Mammary epithelial cell (primary cell): ENCODE measurements at regions of chr3 and their contacts with region 1.

Region 1: DNA sequence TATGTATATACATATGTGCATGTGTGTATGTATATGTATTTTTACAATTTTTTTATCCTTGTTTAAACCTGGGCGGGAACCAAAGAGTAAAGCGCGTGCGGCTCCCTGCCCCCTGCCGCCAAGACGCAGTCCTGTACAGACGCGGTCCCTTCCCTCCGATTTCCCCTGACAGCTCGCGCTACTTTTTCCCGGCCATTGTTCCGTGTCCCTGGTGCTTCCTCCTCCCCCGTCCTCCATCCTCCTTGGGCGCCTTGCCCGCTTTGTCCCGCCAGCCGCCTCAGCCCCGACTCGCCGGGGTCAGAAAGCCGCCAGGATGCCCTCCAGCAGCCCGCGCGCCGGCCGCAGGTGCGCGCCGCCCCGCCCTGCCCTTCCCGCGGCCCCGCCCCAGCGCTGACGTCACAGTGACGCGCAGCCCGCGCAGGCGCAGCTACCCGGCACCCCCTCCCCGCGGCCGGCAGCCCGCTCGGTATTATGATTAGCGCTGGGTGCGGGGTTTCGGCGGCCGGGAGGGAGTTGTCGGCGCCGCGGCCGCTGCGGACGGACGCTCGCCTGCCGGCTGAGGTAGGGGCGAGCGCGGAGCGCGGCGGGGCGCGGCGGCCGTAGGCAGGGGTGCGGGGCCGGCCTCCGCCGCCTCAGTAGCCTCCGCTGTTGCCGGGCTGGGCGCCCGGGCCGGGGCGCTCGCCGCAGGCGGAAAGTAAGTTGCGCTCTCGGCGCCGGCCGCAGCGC is at the start of gene SNRK:
- DNase-seq: peak; percentile 81
- H3K4me3 ChIP-seq: peak within 1 kb of the TSS; percentile 69 to 86 (median 80)
- H3K27ac ChIP-seq: peak within 1 kb of the TSS; percentile 92
- H3K4me1 ChIP-seq: peaks cover 32% of the 10 kb centered on the region
- H3K27me3 ChIP-seq: no peaks in the 10 kb centered on the region
- CTCF ChIP-seq: peak in 1 of 2 donors; percentile 43
- total RNA-seq, gene SNRK: 17.5 to 18.6 TPM

Region 2: GRCh38 chr3:43162230-43163084 is 123.8 kb before region 1 on chr3:
- CTCF ChIA-PET with region 1: no interaction called
- dilution Hi-C with region 1: no loop called
- in situ Hi-C with region 1: no loop called
- intact Hi-C with region 1: loop called (anchors 1 kb)
- DNase-seq: no peak
- H3K4me3 ChIP-seq: no peak overlapping the region
- H3K27ac ChIP-seq: no peak overlapping the region
- H3K4me1 ChIP-seq: no peaks in the 10 kb centered on the region
- H3K27me3 ChIP-seq: no peaks in the 10 kb centered on the region
- CTCF ChIP-seq: peak; percentile 11 to 48

Region 3: DNA sequence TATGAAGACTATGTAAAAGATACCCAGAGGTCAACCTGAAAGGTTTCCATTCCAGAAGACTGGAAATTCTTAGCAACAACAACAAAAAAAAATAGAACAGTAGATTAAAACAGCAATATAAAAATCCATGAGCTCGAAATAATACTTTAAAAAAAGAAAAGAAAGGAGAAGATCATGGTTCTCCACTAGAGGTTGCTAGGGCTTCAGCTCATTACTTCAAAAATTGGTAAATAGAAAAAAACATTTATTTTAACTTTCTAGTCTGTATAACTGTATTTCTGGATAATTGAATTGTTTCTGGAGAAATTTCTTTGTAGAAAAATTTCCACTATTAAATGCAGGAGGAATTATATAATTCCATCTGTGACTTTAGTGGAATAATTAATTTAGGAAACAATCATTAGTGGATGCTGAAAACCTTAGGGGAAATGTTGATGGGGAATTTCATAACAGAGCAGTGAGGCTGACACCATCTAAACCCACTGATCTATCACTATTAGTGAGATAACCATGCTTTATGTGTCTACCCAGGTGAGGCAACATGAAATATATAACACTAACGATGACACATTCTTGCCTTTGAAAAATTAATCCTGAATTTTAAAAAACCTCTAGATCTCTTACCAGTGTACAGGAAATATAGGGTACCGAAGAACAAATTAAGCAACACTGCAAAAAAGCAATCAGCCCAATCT is 62.5 kb before region 1 on chr3:
- CTCF ChIA-PET with region 1: interaction called, 3 read pairs
- dilution Hi-C with region 1: no loop called
- in situ Hi-C with region 1: no loop called
- intact Hi-C with region 1: loop called (anchors 2 kb)
- DNase-seq: no peak
- H3K4me3 ChIP-seq: no peak overlapping the region
- H3K27ac ChIP-seq: no peak overlapping the region
- H3K4me1 ChIP-seq: no peaks in the 10 kb centered on the region
- H3K27me3 ChIP-seq: peaks cover 2% of the 10 kb centered on the region
- CTCF ChIP-seq: peak; percentile 30 to 52

Region 4: DNA sequence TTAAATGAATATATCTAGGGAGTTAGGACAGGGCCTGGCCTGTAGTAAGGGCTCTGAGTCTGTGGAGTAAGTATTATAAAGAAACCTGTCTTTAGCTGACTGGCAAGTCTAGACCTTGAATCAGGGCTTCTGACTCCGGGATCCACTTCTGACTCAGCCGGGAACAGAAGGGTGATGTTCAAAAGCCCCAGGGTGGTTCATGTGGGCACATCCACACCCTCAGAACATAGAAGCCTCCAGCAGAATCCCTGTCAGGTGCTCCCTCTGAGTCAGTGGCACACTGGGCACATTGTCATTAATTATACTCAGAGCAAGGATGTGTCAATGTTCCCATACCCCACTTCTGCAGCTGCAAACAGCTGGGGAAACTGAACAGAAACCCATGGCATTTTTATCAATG is 26.7 kb before region 1 on chr3:
- CTCF ChIA-PET with region 1: no interaction called
- dilution Hi-C with region 1: no loop called
- in situ Hi-C with region 1: no loop called
- intact Hi-C with region 1: loop called (anchors 1 kb)
- DNase-seq: peak; percentile 99
- H3K4me3 ChIP-seq: no peak overlapping the region
- H3K27ac ChIP-seq: peak overlapping the region; percentile 63
- H3K4me1 ChIP-seq: peaks cover 15% of the 10 kb centered on the region
- H3K27me3 ChIP-seq: no peaks in the 10 kb centered on the region
- CTCF ChIP-seq: no peak

Region 5: DNA sequence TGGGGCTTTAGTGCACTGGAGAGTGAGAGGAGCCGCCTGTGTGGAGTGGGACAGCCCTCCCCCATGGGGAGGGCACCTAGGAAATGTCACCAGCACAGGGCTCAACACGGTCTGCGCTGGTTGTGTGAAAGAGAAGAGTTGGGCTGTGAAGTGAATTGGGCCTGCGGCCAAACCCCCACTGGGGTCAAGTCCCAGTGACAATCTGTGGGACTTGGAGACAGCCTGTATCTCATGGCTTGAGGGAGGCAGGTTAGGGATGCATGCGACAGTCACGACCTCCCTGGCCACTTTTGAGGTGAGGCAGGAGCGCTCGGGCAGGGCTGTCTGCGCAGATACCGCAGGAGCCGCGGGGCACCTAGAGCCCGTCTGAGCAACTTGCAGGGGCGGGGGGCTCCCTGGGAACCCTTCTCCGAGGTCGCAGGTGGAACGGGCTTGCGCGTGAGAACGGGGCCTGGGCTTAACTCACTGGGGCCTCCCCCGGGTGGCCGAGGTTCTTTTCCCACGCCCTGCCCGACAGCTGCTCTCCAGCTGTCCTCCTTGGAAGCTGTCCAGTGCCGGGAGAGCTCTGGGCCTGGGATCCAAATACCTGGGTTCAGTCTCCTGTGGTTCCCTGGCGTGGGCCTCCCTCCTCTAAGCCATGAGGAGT is 77.5 kb after region 1 on chr3:
- CTCF ChIA-PET with region 1: no interaction called
- dilution Hi-C with region 1: no loop called
- in situ Hi-C with region 1: no loop called
- intact Hi-C with region 1: no loop called
- DNase-seq: no peak
- H3K4me3 ChIP-seq: no peak overlapping the region
- H3K27ac ChIP-seq: no peak overlapping the region
- H3K4me1 ChIP-seq: no peaks in the 10 kb centered on the region
- H3K27me3 ChIP-seq: no peaks in the 10 kb centered on the region
- CTCF ChIP-seq: no peak

Region 6: GRCh38 chr3:43503067-43503728 is 216.9 kb after region 1 on chr3:
- CTCF ChIA-PET with region 1: no interaction called
- dilution Hi-C with region 1: no loop called
- in situ Hi-C with region 1: no loop called
- intact Hi-C with region 1: loop called (anchors 5 kb)
- DNase-seq: no peak
- H3K4me3 ChIP-seq: no peak overlapping the region
- H3K27ac ChIP-seq: no peak overlapping the region
- H3K4me1 ChIP-seq: peaks cover 3% of the 10 kb centered on the region
- H3K27me3 ChIP-seq: no peaks in the 10 kb centered on the region
- CTCF ChIP-seq: peak; percentile 45 to 48

Region 7: GRCh38 chr3:43742920-43743319 is 456.6 kb after region 1 on chr3:
- CTCF ChIA-PET with region 1: no interaction called
- dilution Hi-C with region 1: no loop called
- in situ Hi-C with region 1: no loop called
- intact Hi-C with region 1: no loop called
- DNase-seq: no peak
- H3K4me3 ChIP-seq: no peak overlapping the region
- H3K27ac ChIP-seq: no peak overlapping the region
- H3K4me1 ChIP-seq: peaks cover 2% of the 10 kb centered on the region
- H3K27me3 ChIP-seq: no peaks in the 10 kb centered on the region
- CTCF ChIP-seq: peak; percentile 17 to 18